Activated CD4-positive, alpha-beta memory T cell treated with anti-CD3 and anti-CD28 coated beads, Interleukin-2, amount 10 ng/mL, durations not matched to agents 7 days and 5 days (primary cell): ENCODE measurements at regions of chr9 and their contacts with region 1.

Region 1: DNA sequence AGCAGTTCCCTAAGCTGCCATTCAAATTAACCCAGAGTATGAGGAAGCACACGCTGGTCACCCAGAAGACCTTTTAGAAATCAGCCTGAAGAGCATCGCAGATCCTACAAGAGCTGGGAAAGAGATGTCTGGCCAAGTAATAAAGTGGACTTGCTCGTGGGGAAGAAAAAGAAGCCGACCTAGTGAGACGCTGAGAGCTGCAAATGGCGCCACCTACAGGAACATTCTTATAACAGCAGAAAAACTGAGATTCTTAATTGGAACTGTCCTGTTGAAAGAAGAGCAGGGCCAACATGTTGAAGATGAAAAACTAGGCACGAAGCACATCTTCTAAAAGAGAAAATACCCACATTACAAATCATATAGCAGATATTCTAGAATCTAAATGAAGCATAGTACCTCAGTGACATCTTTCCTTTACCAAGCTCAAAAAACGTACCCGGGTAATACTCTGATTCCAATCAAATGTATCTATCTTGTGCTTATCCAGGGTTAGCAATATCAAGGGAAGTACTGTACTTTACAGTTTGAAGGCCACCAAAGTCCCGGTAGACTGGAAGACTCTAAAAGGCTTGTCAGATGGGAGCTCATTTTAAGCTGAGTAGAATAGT is 3.9 kb upstream of the GNAQ start:
- DNase-seq: peak; percentile 61
- H3K4me3 Mint-ChIP-seq: no peak overlapping the region
- H3K27ac Mint-ChIP-seq: no peak overlapping the region
- H3K4me1 Mint-ChIP-seq: peaks cover 34% of the 10 kb centered on the region
- H3K27me3 Mint-ChIP-seq: peaks cover 2% of the 10 kb centered on the region

Region 2: GRCh38 chr9:77896938-77897667 is 138.4 kb before region 1 on chr9:
- CTCF ChIA-PET with region 1: interaction called, 11 read pairs
- POLR2A ChIA-PET with region 1: interaction called, 3 read pairs
- DNase-seq: no peak
- H3K4me3 Mint-ChIP-seq: no peak overlapping the region
- H3K27ac Mint-ChIP-seq: no peak overlapping the region
- H3K4me1 Mint-ChIP-seq: peaks cover 27% of the 10 kb centered on the region
- H3K27me3 Mint-ChIP-seq: no peaks in the 10 kb centered on the region

Region 3: DNA sequence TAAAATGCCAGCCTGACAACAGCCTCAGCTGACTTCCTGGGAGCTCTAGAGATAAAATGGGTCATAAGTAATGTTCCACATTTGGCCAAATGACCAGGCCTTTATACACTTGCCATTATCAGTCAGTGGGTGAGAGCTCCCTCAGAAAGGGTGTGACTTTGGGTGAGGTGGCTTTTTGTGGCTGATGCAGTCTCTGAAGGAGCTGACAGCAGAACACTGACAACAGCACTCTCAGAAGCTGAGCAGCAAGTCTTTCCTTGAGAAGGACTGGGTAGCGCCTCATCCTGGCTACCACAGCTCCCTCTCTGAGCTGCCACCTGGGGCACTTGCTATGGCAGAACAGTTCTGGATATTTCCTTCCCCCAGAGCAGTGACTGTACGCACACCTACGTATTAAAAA is 18.1 kb after region 1 on chr9:
- CTCF ChIA-PET with region 1: interaction called, 33 read pairs
- POLR2A ChIA-PET with region 1: interaction called, 5 read pairs
- DNase-seq: peak; percentile 43
- H3K4me3 Mint-ChIP-seq: no peak overlapping the region
- H3K27ac Mint-ChIP-seq: peak overlapping the region; percentile 1
- H3K4me1 Mint-ChIP-seq: peaks cover 20% of the 10 kb centered on the region
- H3K27me3 Mint-ChIP-seq: peaks cover 21% of the 10 kb centered on the region

Region 4: GRCh38 chr9:78115073-78115472 is 79.6 kb after region 1 on chr9:
- CTCF ChIA-PET with region 1: interaction called, 17 read pairs
- POLR2A ChIA-PET with region 1: interaction called, 3 read pairs
- DNase-seq: no peak
- H3K4me3 Mint-ChIP-seq: no peak overlapping the region
- H3K27ac Mint-ChIP-seq: no peak overlapping the region
- H3K4me1 Mint-ChIP-seq: peaks cover 45% of the 10 kb centered on the region
- H3K27me3 Mint-ChIP-seq: no peaks in the 10 kb centered on the region

Region 5: DNA sequence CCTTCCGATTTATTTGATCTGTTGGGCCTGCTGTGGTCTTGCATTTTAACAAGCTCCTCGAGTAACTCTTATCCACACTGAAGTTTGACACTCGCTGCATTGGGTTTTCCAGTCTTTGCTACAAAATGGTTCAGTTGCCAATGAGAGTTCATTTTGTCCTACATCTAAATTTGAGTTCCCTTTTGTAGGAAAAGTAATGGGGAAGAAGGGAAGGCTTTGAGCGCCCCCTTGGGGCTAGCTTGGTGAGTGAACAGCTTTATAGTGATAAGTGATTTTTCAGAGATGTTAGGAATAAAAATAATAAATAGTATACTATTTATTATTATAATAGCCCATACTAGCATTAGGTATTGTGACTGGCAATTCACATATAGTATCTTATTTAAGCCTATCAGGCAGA is 86.0 kb after region 1 on chr9:
- CTCF ChIA-PET with region 1: interaction called, 17 read pairs
- POLR2A ChIA-PET with region 1: interaction called, 6 read pairs
- DNase-seq: peak; percentile 64
- H3K4me3 Mint-ChIP-seq: no peak overlapping the region
- H3K27ac Mint-ChIP-seq: no peak overlapping the region
- H3K4me1 Mint-ChIP-seq: peaks cover 40% of the 10 kb centered on the region
- H3K27me3 Mint-ChIP-seq: peaks cover 1% of the 10 kb centered on the region

Region 6: GRCh38 chr9:78248635-78249034 is 213.1 kb after region 1 on chr9:
- CTCF ChIA-PET with region 1: no interaction called
- POLR2A ChIA-PET with region 1: no interaction called
- DNase-seq: no peak
- H3K4me3 Mint-ChIP-seq: no peak overlapping the region
- H3K27ac Mint-ChIP-seq: no peak overlapping the region
- H3K4me1 Mint-ChIP-seq: peaks cover 6% of the 10 kb centered on the region
- H3K27me3 Mint-ChIP-seq: no peaks in the 10 kb centered on the region

Region 7: DNA sequence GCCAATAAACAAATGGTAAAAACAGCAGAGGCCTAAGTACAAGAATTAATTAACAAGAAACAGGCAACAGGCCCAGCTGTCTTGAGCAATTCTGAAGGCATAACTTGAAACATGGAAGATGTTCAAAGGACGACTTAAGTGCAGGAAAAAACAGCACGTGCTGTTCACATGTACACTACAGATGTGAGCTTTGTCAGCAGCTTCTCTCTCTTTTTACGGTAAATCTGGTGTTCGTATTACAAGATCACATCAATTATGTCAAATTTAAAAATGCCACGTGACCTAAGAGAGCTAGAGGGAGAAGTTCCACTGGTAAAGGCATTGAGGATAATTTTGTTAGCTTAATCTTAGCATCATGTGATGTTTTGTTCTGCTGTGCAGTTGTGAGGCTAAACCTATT is 542.6 kb after region 1 on chr9:
- CTCF ChIA-PET with region 1: no interaction called
- POLR2A ChIA-PET with region 1: no interaction called
- DNase-seq: no peak
- H3K4me3 Mint-ChIP-seq: no peak overlapping the region
- H3K27ac Mint-ChIP-seq: no peak overlapping the region
- H3K4me1 Mint-ChIP-seq: no peaks in the 10 kb centered on the region
- H3K27me3 Mint-ChIP-seq: no peaks in the 10 kb centered on the region